Heart left ventricle (tissue), 16 donors: ENCODE measurements at regions of chr20 and their contacts with region 1.

Region 1: DNA sequence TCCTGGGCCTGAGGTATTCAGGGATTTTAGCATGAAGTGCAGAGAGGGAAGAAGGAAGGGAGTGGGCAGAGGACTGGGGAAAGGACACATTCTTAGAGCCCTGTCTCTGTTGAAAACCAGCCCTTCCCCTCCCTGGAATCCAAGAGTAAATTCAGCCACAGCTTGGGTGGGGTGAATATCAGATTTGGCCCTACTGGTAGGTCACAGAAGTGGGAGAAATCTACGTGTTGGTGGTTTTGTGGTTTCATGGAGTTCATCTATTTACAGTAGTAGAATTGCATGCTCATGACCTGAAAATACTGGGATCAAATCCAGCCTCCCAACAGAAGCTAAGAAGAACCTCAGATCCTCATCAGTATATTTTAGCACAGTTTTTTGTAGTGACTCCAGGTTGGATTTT is 404.4 kb downstream of the BMP2 start:
- DNase-seq: no peak
- ATAC-seq: no peak
- H3K4me3 ChIP-seq: no peak overlapping the region
- H3K27ac ChIP-seq: no peak overlapping the region
- H3K4me1 ChIP-seq: no peaks in the 10 kb centered on the region
- H3K27me3 ChIP-seq: no peaks in the 10 kb centered on the region
- CTCF ChIP-seq: no peak
- POLR2A ChIP-seq: no peak

Region 2: DNA sequence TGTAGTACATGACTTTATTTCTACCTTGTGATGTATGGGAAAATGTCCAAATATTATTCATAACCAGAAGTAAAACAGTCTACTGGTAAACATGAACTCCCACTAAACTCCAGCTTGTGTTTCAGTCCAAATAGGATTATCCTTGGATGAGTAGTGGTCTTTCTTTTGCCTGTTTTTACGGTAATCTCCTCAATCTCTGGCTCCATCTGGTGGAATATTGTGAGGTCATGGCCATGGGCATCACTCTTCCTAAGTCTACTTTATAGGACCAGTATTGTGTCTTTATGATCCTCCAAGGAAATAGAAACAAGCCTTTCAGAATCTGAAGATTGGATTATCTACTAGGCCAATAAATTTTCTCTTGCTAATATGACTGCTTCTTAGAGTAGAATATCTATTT is 100.6 kb after region 1 on chr20:
- intact Hi-C with region 1: loop called in 1 of 10 experiments (anchors 10 kb)
- DNase-seq: no peak
- ATAC-seq: no peak
- H3K4me3 ChIP-seq: no peak overlapping the region
- H3K27ac ChIP-seq: no peak overlapping the region
- H3K4me1 ChIP-seq: no peaks in the 10 kb centered on the region
- H3K27me3 ChIP-seq: peaks cover 0 to 5% (median 0%) of the 10 kb centered on the region in 9 donors
- CTCF ChIP-seq: peak in 9 of 12 donors; percentile 7 to 47 (median 25)
- POLR2A ChIP-seq: no peak